CD14-positive monocyte (primary cell): ENCODE measurements at regions of chr11 and their contacts with region 1.

Region 1: DNA sequence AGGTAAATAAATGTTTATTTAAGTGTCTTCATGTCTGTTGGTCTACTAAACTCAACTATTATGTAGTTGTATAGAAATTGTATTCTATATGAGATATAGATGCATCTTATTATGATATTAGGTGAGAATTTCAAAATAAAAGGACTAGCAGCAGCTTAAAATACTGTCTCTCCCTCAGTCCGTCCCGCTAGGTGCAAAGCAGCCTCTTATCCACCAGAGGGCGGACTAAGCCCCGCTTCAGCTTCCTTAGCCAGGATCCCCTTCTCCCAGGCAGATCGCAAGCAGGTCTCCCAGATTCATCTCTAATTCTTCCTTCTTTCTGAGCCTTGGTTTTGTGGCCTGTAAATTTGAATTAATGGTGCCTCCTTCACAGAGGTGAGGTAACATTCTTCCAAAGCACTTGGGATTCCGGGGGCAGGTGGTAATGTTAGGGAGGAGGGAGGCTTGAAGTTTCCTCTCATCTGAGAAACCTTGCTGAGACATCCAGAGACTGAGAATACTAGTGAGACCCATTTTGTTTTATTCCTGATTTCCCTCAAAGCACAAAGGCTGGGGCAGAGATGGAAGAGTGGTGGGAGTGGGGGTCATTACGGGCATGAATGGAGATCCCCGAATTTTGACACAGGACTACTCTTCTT is 13.5 kb upstream of the INSC start:
- DNase-seq: peak; percentile 18 to 52 (median 47)
- H3K4me3 ChIP-seq: no peak overlapping the region
- H3K4me3 Mint-ChIP-seq: no peak overlapping the region
- H3K27ac ChIP-seq: no peak overlapping the region
- H3K27ac Mint-ChIP-seq: no peak overlapping the region
- H3K4me1 ChIP-seq: no peaks in the 10 kb centered on the region
- H3K4me1 Mint-ChIP-seq: peaks cover 3% of the 10 kb centered on the region
- H3K27me3 ChIP-seq: peaks cover 0 to 2% of the 10 kb centered on the region in 2 donors
- H3K27me3 Mint-ChIP-seq: peaks cover 2 to 5% (median 2%) of the 10 kb centered on the region in 3 donors
- CTCF ChIP-seq: peak; percentile 95

Region 2: DNA sequence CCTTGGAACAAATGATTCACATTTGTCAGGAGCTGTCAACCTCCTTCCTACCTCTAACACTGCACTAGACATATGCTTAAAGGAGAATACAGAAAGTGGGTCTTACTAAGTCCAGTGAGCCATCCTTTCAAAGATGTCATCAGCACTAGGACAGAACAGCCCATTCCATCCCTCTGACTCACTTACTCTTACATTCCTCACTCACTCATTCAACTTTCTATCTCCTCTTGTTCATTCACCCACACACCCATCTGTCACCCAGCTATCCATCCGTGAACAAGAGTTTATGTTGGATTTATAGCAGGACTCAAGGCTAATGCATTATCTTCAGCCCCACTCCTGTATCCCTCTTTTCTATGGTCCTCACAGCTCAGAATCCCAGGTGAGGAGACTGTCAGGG is 22.7 kb after region 1 on chr11:
- intact Hi-C with region 1: no loop called
- DNase-seq: no peak
- H3K4me3 ChIP-seq: no peak overlapping the region
- H3K4me3 Mint-ChIP-seq: no peak overlapping the region
- H3K27ac ChIP-seq: no peak overlapping the region
- H3K27ac Mint-ChIP-seq: no peak overlapping the region
- H3K4me1 ChIP-seq: no peaks in the 10 kb centered on the region
- H3K4me1 Mint-ChIP-seq: peaks cover 2% of the 10 kb centered on the region
- H3K27me3 ChIP-seq: no peaks in the 10 kb centered on the region
- H3K27me3 Mint-ChIP-seq: peaks cover 4 to 9% (median 7%) of the 10 kb centered on the region in 3 donors
- CTCF ChIP-seq: no peak

Region 3: DNA sequence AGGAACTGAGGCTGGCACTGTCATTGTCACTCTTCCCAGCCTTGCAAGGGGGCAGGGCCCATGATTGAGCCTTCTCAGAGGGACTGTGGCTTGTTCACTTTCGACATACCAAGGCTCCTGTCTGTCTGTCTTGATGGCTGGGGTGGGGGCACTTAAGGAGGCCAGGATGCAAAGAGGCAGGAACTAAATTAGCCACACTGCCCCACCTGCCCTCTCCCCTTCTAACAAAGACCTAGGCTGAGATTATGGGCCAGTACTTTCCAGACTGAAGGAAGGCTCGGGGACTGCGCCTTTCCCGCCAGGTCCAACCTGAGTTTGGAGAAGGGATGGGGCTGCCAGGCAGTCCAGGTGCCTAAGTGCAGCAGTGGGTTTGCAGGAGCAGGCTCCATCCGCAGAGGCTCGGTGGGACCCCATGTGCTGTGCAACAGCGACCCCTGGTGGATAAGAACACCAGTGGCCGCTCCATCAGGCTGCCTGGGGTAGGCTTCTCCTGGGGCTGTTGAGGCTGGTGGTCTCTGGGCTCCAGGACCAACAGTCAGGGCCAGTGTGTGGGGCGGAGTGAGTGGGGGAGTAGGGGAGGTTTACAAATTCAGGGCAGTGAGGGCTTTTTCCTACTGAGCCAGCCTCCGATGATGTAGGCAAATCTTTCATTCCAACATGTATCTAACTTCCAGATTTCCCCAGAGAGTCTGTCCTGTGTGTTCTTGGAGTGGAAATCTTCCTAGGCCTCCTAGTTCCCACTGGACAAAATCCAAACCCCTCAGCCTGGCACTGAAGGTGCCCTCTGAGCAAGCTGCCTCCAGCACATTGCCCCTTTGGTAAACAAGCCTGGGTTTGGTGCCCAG is 107.4 kb after region 1 on chr11:
- intact Hi-C with region 1: loop called (anchors 2 kb)
- DNase-seq: peak; percentile 29 to 57 (median 56)
- H3K4me3 ChIP-seq: no peak overlapping the region
- H3K4me3 Mint-ChIP-seq: no peak overlapping the region
- H3K27ac ChIP-seq: no peak overlapping the region
- H3K27ac Mint-ChIP-seq: no peak overlapping the region
- H3K4me1 ChIP-seq: no peaks in the 10 kb centered on the region
- H3K4me1 Mint-ChIP-seq: peaks cover 5% of the 10 kb centered on the region
- H3K27me3 ChIP-seq: no peaks in the 10 kb centered on the region
- H3K27me3 Mint-ChIP-seq: peaks cover 1 to 7% (median 2%) of the 10 kb centered on the region in 3 donors
- CTCF ChIP-seq: peak; percentile 90